Astrocyte of the cerebellum (primary cell): ENCODE measurements at regions of chr3 and their contacts with region 1.

Region 1: DNA sequence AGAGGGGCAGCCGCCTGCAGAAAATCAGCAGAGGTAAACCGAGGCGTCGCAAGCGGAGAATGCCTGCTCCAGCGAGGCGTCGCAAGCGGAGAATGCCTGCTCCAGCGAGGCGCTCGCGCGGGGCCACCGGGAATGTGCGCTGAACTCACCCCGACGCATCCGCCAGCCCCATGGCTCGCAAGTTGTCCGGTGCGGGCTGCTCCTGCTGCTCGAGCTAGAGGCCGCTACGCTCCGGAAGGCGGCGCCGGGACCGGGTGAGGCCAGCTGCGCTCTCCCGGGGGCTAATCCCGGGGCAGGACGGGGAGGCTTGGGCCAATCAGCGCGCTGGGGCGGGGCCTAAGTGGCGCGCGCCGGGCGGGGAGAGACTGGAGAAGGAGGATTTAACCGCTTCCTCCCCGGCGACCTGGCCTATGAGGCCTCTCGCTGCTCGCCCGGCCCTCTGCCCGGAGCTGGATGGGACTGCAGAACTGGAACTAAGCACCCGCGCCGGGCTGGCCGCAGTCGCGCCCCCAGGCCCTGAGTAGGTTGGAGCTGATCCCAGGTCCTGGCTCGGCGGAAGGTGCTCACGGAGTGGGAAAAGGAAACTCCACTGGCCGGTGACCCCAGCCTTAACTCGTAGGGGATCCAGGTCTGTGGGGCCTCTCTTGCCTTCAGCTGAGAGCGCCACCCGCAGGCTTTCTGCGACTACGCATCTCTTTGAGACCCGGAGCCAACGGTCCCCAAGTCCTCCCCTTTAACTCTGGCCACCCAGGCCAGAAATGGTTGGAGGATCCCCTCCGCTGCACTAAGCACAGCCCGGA is at the start of gene SLC26A6:
- DNase-seq: peak; percentile 85
- H3K4me3 ChIP-seq: peak within 1 kb of the TSS; percentile 92
- CTCF ChIP-seq: peak; percentile 57

Region 2: GRCh38 chr3:48556793-48557626 is 78.4 kb before region 1 on chr3 and contains the start of gene PFKFB4:
- in situ Hi-C with region 1: loop called (anchors 10 kb)
- DNase-seq: peak; percentile 98
- H3K4me3 ChIP-seq: peak within 1 kb of the TSS; percentile 67
- CTCF ChIP-seq: no peak